ENCODE measurements at regions of chr12 and their contacts with region 1.

Region 1: GRCh38 chr12:113424915-113425823 is 3.0 kb downstream of the SDSL start:
- DNase-seq: peak; percentile 80
- ATAC-seq: peak; percentile 67
- H3K4me3 Mint-ChIP-seq: peak overlapping the region; percentile 75
- H3K27ac Mint-ChIP-seq: peak overlapping the region; percentile 93
- H3K4me1 Mint-ChIP-seq: peaks cover 16% of the 10 kb centered on the region
- H3K27me3 Mint-ChIP-seq: no peaks in the 10 kb centered on the region; the same call in 1 of the 2 replicates
- CTCF ChIP-seq: peak; percentile 94

Region 2: GRCh38 chr12:113310489-113310888 is 114.7 kb before region 1 on chr12:
- CTCF ChIA-PET with region 1: interaction called, 13 read pairs
- POLR2A ChIA-PET with region 1: no interaction called
- DNase-seq: no peak
- ATAC-seq: peak; percentile 37
- H3K4me3 Mint-ChIP-seq: no peak overlapping the region
- H3K27ac Mint-ChIP-seq: no peak overlapping the region
- H3K4me1 Mint-ChIP-seq: peaks cover 3% of the 10 kb centered on the region; the same call in 1 of the 2 replicates
- H3K27me3 Mint-ChIP-seq: no peaks in the 10 kb centered on the region
- CTCF ChIP-seq: no peak

Region 3: GRCh38 chr12:113334786-113335540 is 90.2 kb before region 1 on chr12 and contains the start of gene SLC8B1:
- CTCF ChIA-PET with region 1: interaction called, 19 read pairs
- POLR2A ChIA-PET with region 1: no interaction called
- DNase-seq: peak; percentile 92
- ATAC-seq: peak; percentile 96
- H3K4me3 Mint-ChIP-seq: peak within 1 kb of the TSS; percentile 91
- H3K27ac Mint-ChIP-seq: no peak within 1 kb of the TSS
- H3K4me1 Mint-ChIP-seq: peaks cover 26% of the 10 kb centered on the region
- H3K27me3 Mint-ChIP-seq: peaks cover 18% of the 10 kb centered on the region
- CTCF ChIP-seq: no peak
- total RNA-seq, gene SLC8B1: 12.2 to 13.9 TPM (median 13.8 TPM) in 3 replicates

Region 4: DNA sequence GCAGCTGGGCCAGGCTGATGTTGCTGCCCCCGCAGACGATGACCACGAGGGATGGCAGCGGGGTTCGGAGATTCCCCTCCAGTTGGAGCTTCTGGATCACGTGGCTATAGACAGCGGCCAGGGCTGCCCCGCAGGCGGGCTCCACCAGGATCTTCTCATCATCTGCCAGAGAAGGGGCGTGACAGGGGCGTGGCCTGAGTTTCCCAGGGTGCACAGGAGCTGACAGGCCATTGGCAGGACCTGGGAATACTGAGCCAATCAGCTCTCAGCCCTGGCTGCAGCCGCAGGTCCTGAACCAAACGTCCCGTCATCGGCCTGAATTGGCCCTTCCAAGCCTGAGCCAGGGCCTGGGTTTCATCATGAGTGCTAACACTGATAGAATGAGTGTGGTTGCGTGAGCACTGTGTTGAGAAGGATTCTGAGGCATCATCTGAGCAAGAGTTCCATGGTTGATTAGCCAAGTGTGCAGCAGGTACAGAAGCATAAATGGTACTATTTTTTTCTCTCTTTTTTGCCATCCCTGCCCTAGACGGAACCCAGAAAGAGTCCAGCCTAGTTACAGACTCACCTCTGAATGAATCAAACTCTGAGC is 32.1 kb before region 1 on chr12:
- CTCF ChIA-PET with region 1: interaction called, 29 read pairs
- POLR2A ChIA-PET with region 1: no interaction called
- DNase-seq: peak; percentile 94
- ATAC-seq: peak; percentile 98
- H3K4me3 Mint-ChIP-seq: no peak overlapping the region
- H3K27ac Mint-ChIP-seq: no peak overlapping the region
- H3K4me1 Mint-ChIP-seq: peaks cover 3% of the 10 kb centered on the region; the same call in 1 of the 2 replicates
- H3K27me3 Mint-ChIP-seq: peaks cover 3% of the 10 kb centered on the region; the same call in 1 of the 2 replicates
- CTCF ChIP-seq: no peak

Region 5: DNA sequence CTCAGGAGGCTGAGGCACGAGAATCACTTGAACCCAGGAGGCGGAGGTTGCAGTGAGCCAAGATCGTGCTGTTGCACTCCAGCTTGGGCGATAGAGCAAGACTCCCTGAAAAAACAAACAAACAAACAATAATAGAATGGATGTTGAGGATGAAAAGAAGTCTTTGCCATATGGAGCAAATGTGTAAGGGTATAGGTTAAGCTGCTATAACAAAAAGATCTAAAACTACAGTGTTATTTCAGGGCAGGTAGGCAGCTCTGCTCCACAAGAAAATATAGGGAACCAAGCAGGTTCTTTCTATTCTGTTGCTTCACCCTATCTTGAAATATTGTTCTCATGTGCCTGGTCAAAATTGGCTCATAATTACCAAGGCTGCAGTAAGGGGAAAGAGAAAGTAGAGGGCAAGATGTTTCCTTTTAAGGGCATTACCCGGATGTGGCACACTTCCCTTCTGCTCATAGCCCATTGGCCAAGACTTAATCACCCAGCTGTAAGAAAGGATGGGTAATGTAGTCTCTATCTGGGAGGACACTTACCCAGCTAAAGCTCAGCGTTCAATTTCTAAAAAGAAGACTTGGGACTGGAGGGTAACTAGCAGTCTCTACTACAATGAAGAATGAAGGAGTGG is 20.5 kb after region 1 on chr12:
- CTCF ChIA-PET with region 1: interaction called, 10 read pairs
- POLR2A ChIA-PET with region 1: no interaction called
- DNase-seq: no peak
- ATAC-seq: no peak
- H3K4me3 Mint-ChIP-seq: no peak overlapping the region
- H3K27ac Mint-ChIP-seq: no peak overlapping the region
- H3K4me1 Mint-ChIP-seq: no peaks in the 10 kb centered on the region
- H3K27me3 Mint-ChIP-seq: peaks cover 9% of the 10 kb centered on the region
- CTCF ChIP-seq: no peak

Region 6: DNA sequence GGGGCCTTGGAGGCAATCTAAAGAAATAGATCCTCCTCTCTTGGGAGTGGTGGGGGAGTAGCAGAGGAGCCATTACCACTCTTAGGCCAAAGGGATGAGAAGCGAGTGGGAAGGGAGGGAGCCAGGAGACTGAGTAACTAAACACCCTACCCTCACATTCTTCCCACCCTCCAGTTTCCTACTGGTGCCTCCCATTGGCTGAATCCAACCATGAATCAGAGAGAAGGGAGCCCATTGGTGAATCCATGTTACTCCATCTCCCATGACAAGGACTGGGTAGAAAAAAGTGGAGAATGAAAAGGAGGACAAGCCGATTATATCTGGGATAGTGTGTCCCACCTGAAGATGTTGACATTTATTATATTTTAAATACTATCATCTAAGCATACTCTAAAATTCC is 123.3 kb after region 1 on chr12:
- CTCF ChIA-PET with region 1: no interaction called
- POLR2A ChIA-PET with region 1: no interaction called
- DNase-seq: no peak
- ATAC-seq: no peak
- H3K4me3 Mint-ChIP-seq: no peak overlapping the region
- H3K27ac Mint-ChIP-seq: no peak overlapping the region
- H3K4me1 Mint-ChIP-seq: peaks cover 7% of the 10 kb centered on the region
- H3K27me3 Mint-ChIP-seq: no peaks in the 10 kb centered on the region; the same call in 1 of the 2 replicates
- CTCF ChIP-seq: no peak

Region 7: GRCh38 chr12:113818833-113819232 is 393.7 kb after region 1 on chr12:
- CTCF ChIA-PET with region 1: interaction called, 14 read pairs
- POLR2A ChIA-PET with region 1: no interaction called
- DNase-seq: peak; percentile 82
- ATAC-seq: peak; percentile 75
- H3K4me3 Mint-ChIP-seq: no peak overlapping the region
- H3K27ac Mint-ChIP-seq: no peak overlapping the region
- H3K4me1 Mint-ChIP-seq: peaks cover 12% of the 10 kb centered on the region
- H3K27me3 Mint-ChIP-seq: no peaks in the 10 kb centered on the region
- CTCF ChIP-seq: peak; percentile 60